ENCODE measurements at regions of chr17 and their contacts with region 1.

Region 1: DNA sequence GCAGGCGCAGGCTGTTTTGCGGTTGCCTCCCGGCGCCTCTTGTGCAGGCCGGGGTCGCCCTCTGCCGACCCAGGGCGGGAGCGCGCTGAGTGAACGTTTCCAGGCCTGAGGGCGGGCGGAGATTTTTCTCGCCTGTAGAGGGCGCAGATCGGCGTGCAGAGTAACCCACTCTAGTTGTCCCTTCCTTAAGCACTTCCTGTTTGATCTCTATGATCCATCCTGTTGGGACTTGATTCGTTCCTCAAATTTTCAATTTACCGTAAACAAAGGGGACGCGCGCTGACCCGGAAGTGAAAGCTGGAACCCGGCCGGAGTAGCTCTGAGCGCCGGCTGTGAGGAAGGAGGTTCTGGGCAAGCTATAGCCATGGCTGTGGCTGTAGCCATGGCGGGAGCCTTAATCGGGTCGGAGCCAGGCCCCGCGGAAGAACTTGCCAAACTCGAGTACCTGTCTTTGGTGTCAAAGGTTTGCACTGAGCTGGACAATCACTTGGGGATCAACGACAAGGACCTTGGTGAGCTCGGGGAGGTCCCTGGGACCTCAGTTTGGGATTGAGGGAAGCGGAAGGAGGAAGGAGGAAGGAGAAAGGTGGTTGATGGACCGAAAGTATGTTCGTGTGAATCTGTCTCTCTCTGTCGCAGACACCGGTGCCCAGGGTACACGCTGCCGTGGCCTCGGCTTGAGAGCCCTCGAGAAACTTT is at the start of gene DHX8:
- DNase-seq: peak; percentile 97 to 98
- H3K4me3 ChIP-seq: peak within 1 kb of the TSS; percentile 84
- H3K4me1 ChIP-seq: peaks cover 14% of the 10 kb centered on the region
- H3K27me3 ChIP-seq: no peaks in the 10 kb centered on the region

Region 2: GRCh38 chr17:43388359-43389045 is 95.3 kb before region 1 on chr17:
- in situ Hi-C with region 1: loop called (anchors 5 kb)
- DNase-seq: peak; percentile 83 to 88
- H3K4me3 ChIP-seq: peak overlapping the region; percentile 44
- H3K4me1 ChIP-seq: peaks cover 7% of the 10 kb centered on the region
- H3K27me3 ChIP-seq: no peaks in the 10 kb centered on the region

Region 3: GRCh38 chr17:43984521-43984920 is 500.7 kb after region 1 on chr17:
- in situ Hi-C with region 1: no loop called
- DNase-seq: no peak
- H3K4me3 ChIP-seq: no peak overlapping the region
- H3K4me1 ChIP-seq: no peaks in the 10 kb centered on the region
- H3K27me3 ChIP-seq: peaks cover 10% of the 10 kb centered on the region

Measured in HAP-1 (cell line).